T-cell (primary cell): ENCODE measurements at regions of chr9 and their contacts with region 1.

Region 1: DNA sequence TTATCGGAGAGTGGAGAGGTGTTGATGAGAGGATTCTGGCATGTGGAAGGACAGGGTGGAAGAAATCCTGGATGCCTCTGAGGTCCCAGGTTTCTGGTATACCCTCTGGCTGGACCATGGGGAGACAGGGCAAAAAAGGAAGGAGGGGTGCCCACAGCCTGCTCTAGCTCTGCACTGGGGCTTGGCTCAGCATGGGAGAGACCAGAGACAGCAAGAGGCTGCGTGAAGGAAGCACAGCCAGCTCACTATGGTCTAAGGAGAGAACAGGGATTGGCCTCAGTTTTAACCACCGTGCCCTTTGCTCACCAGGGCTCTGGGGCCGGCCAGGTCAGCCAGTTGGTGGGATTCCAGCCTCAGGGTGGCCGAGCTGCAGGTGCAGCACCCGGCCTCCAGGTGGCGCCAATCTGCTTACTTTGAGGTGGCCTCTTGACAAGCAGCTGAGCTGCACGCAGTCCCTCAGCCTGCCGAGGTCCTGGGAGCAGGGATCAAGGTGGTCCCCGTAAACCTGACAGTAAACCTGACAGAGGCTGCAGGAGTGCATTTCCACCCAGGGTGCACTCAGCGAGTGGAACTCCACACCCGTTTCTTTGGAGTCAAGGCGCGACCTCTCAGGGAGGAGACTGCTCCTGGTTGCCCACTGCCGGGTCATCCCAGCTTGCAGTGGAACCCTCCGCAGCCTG is 25.0 kb upstream of the SPTLC1 start:
- DNase-seq: peak; percentile 18 to 78 (median 59)
- ATAC-seq: peak; percentile 66 to 76 (median 71)
- H3K4me3 ChIP-seq: peak overlapping the region; percentile 10 to 19
- H3K4me3 Mint-ChIP-seq: peak overlapping the region in 2 of 3 donors; percentile 53 to 81
- H3K27ac ChIP-seq: no peak overlapping the region
- H3K27ac Mint-ChIP-seq: no peak overlapping the region
- H3K4me1 ChIP-seq: peaks cover 0 to 23% of the 10 kb centered on the region in 2 experiments
- H3K4me1 Mint-ChIP-seq: peaks cover 8 to 15% (median 14%) of the 10 kb centered on the region in 3 donors
- H3K27me3 ChIP-seq: peaks cover 0 to 64% of the 10 kb centered on the region in 2 experiments
- H3K27me3 Mint-ChIP-seq: peaks cover 37 to 41% of the 10 kb centered on the region in 2 donors

Region 2: DNA sequence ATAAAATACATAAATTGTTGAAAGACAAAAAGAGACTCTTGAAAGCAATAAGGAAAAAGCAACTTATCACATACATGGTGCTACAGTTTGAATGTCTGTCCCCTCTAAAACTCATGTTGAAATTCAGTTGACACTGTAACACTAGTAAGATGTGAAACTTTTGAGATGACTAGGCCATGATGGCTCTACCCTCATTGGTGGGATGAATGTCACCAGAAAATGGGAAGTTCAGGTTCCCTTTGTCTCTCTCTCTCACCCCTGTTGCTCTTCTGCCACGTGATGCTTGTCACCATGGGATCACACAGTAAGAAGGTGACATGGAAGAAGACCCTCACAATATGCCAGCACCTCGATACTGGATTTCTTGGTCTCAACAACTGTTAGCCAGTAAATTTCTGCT is 25.3 kb after region 1 on chr9:
- CTCF ChIA-PET with region 1: no interaction called
- POLR2A ChIA-PET with region 1: no interaction called
- DNase-seq: no peak
- ATAC-seq: no peak
- H3K4me3 ChIP-seq: no peak overlapping the region
- H3K4me3 Mint-ChIP-seq: no peak overlapping the region
- H3K27ac ChIP-seq: no peak overlapping the region
- H3K27ac Mint-ChIP-seq: no peak overlapping the region
- H3K4me1 ChIP-seq: no peaks in the 10 kb centered on the region
- H3K4me1 Mint-ChIP-seq: no peaks in the 10 kb centered on the region
- H3K27me3 ChIP-seq: peaks cover 0 to 13% of the 10 kb centered on the region in 2 experiments
- H3K27me3 Mint-ChIP-seq: peaks cover 14 to 24% of the 10 kb centered on the region in 2 donors

Region 3: GRCh38 chr9:92634712-92635605 is 494.7 kb after region 1 on chr9:
- CTCF ChIA-PET with region 1: interaction called, 9 to 10 read pairs
- POLR2A ChIA-PET with region 1: no interaction called
- DNase-seq: peak in 34 of 35 experiments; percentile 11 to 72 (median 47)
- ATAC-seq: peak; percentile 48 to 65 (median 53)
- H3K4me3 ChIP-seq: no peak overlapping the region
- H3K4me3 Mint-ChIP-seq: no peak overlapping the region
- H3K27ac ChIP-seq: no peak overlapping the region
- H3K27ac Mint-ChIP-seq: no peak overlapping the region
- H3K4me1 ChIP-seq: peaks cover 0 to 2% of the 10 kb centered on the region in 2 experiments
- H3K4me1 Mint-ChIP-seq: no peaks in the 10 kb centered on the region
- H3K27me3 ChIP-seq: no peaks in the 10 kb centered on the region
- H3K27me3 Mint-ChIP-seq: no peaks in the 10 kb centered on the region